ENCODE measurements at regions of chr4 and their contacts with region 1.

Region 1: GRCh38 chr4:70948665-70949260 is 44.7 kb upstream of the DCK start:
- DNase-seq: no peak
- H3K4me3 Mint-ChIP-seq: no peak overlapping the region
- H3K27ac Mint-ChIP-seq: no peak overlapping the region
- H3K4me1 Mint-ChIP-seq: peaks cover 12% of the 10 kb centered on the region
- H3K27me3 Mint-ChIP-seq: no peaks in the 10 kb centered on the region

Region 2: DNA sequence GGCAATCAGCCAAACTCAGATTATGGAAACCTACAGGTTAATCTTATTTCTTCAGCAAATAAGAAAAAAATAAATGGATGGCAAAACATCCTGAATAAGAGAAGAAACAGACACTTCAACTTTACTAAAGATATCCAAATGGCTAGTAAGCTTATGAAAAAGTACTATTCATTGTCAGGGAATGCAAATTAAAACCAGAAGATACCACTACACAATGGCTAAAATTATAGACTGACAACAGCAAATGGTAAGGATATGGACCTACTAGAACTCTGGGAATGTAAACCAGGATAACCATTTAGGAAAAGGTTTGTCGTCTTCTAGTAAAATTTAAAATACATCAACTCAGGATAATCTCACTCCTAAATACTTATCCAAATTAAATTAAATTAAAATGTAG is 133.4 kb before region 1 on chr4:
- intact Hi-C with region 1: no loop called
- DNase-seq: no peak
- H3K4me3 Mint-ChIP-seq: no peak overlapping the region
- H3K27ac Mint-ChIP-seq: no peak overlapping the region
- H3K4me1 Mint-ChIP-seq: peaks cover 12% of the 10 kb centered on the region
- H3K27me3 Mint-ChIP-seq: no peaks in the 10 kb centered on the region

Region 3: GRCh38 chr4:70993181-70994068 is 44.7 kb after region 1 on chr4 and contains the start of gene DCK:
- intact Hi-C with region 1: loop called (anchors 5 kb)
- DNase-seq: peak; percentile 83
- H3K4me3 Mint-ChIP-seq: peak within 1 kb of the TSS; percentile 99
- H3K27ac Mint-ChIP-seq: peak within 1 kb of the TSS; percentile 93
- H3K4me1 Mint-ChIP-seq: peaks cover 39% of the 10 kb centered on the region
- H3K27me3 Mint-ChIP-seq: no peaks in the 10 kb centered on the region
- total RNA-seq, gene DCK: 35.1 and 35.3 TPM in 2 replicates

Region 4: GRCh38 chr4:71184195-71184781 is 235.5 kb after region 1 on chr4:
- intact Hi-C with region 1: no loop called
- DNase-seq: peak; percentile 11
- H3K4me3 Mint-ChIP-seq: no peak overlapping the region
- H3K27ac Mint-ChIP-seq: no peak overlapping the region
- H3K4me1 Mint-ChIP-seq: peaks cover 22% of the 10 kb centered on the region
- H3K27me3 Mint-ChIP-seq: peaks cover 41% of the 10 kb centered on the region

Measured in activated T-helper 2 cell treated with anti-CD3 and anti-CD28 coated beads, Interferon-gamma antibody, Interleukin-2, Interleukin-4, amounts not matched to agents 10 μg/mL and 5 μg/mL and 100 μg/mL, durations not matched to agents 14 hours and 24 hours and 36 hours (primary cell).